ENCODE measurements at regions of chrX and their contacts with region 1.

Region 1: GRCh38 chrX:112190646-112191045 is 108.1 kb upstream of the TRPC5 start:
- DNase-seq: no peak
- H3K4me3 ChIP-seq: no peak overlapping the region
- H3K27ac ChIP-seq: no peak overlapping the region
- H3K4me1 ChIP-seq: no peaks in the 10 kb centered on the region
- H3K27me3 ChIP-seq: peaks cover 0 to 19% of the 10 kb centered on the region in 2 donors
- CTCF ChIP-seq: no peak
- POLR2A ChIP-seq: no peak

Region 2: GRCh38 chrX:112235547-112235946 is 44.9 kb after region 1 on chrX:
- intact Hi-C with region 1: loop called (anchors 2 kb)
- DNase-seq: no peak
- H3K4me3 ChIP-seq: no peak overlapping the region
- H3K27ac ChIP-seq: no peak overlapping the region
- H3K4me1 ChIP-seq: no peaks in the 10 kb centered on the region
- H3K27me3 ChIP-seq: peaks cover 0 to 27% of the 10 kb centered on the region in 2 donors
- CTCF ChIP-seq: no peak
- POLR2A ChIP-seq: no peak

Region 3: DNA sequence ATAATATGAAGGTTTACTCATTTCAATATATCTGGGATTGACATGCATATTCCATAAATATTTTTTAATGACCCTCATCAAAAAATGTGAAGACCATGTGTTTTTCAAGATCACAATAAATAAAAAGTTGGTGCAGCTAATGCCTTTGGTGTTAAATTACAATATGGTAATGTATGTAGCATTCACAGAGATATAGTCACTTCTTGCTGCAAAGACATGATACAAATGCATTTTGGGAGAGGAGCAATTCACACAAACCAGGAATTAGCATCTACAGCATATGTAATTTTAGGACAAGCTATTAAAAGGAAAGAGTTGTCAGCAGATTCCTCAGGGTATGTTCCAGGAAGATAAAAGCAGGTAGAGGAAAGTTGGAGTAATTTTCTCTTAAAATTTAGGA is 1658.8 kb after region 1 on chrX:
- intact Hi-C with region 1: no loop called
- DNase-seq: no peak
- H3K4me3 ChIP-seq: no peak overlapping the region
- H3K27ac ChIP-seq: no peak overlapping the region
- H3K4me1 ChIP-seq: no peaks in the 10 kb centered on the region
- H3K27me3 ChIP-seq: peaks cover 0 to 24% of the 10 kb centered on the region in 2 donors
- CTCF ChIP-seq: no peak
- POLR2A ChIP-seq: no peak